ENCODE measurements at regions of chr2 and their contacts with region 1.

Region 1: DNA sequence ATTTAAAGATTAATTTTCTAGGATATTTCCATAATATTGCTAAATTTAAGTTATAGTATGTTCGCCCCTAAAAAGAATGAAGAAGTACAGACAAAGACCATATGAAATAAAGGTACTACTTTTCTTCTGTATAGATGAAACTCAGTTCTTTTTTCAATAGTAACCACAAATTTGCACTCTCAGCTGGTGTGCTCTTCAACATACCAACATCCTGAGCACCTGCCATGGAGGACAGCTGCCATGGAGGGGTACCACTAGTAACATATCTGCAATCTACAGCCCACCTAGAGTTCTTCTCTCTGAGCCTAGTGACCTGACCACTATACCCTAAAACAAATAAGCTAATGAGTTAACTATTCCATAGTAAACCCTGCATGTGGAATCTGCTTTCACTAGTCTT is 36.8 kb upstream of the ERCC3 start:
- DNase-seq: no peak
- H3K4me3 ChIP-seq: no peak overlapping the region
- H3K27ac ChIP-seq: no peak overlapping the region
- H3K4me1 ChIP-seq: no peaks in the 10 kb centered on the region
- H3K27me3 ChIP-seq: no peaks in the 10 kb centered on the region
- CTCF ChIP-seq: no peak
- POLR2A ChIP-seq: no peak

Region 2: GRCh38 chr2:127422810-127423475 is 92.2 kb after region 1 on chr2:
- intact Hi-C with region 1: loop called (anchors 5 kb)
- DNase-seq: peak; percentile 17 to 30
- H3K4me3 ChIP-seq: peak overlapping the region in 1 of 3 donors; percentile 34
- H3K27ac ChIP-seq: no peak overlapping the region
- H3K4me1 ChIP-seq: peaks cover 10 to 15% of the 10 kb centered on the region in 2 donors
- H3K27me3 ChIP-seq: no peaks in the 10 kb centered on the region
- CTCF ChIP-seq: no peak
- POLR2A ChIP-seq: no peak

Measured in thyroid gland (tissue), 4 donors.